ENCODE measurements at regions of chr4 and their contacts with region 1.

Region 1: DNA sequence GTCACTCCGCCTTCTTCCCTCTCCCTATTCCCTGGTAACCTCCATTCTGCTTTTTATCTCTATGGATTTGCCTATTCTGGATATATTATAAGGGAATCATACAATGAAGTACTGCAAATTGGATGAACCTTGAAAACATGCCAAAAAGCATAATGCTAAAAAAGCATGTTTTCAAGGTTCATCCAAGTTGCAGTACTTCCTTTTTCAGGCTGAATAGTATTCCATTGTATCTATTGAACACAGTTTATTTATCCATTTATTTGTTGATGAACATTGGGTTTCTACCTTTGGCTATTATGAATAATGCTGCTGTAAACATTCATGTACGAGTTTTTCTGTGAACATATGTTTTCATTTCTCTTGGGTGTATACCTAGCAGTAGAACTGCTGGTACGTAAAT is 9.2 kb downstream of the SAP30 start:
- DNase-seq: no peak
- ATAC-seq: no peak
- H3K4me3 ChIP-seq: no peak overlapping the region
- H3K27ac ChIP-seq: no peak overlapping the region
- H3K4me1 ChIP-seq: no peaks in the 10 kb centered on the region
- H3K27me3 ChIP-seq: no peaks in the 10 kb centered on the region

Region 2: DNA sequence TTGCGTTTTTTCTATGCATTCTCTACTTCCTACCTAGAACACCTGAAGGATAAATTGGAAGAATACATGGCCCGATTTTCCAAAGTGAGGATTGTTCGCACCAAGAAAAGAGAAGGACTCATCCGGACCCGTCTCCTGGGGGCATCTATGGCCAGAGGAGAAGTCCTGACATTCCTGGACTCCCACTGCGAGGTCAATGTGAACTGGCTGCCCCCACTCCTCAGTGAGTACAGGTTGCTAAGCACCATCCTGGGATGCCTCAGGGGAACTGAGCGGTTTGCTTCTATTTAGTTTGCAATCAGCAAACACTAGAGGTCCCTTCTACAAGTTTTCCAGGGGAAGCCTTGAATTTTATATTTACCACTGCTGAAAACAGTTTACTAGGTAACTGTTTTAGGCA is 570.6 kb before region 1 on chr4:
- intact Hi-C with region 1: no loop called
- DNase-seq: no peak
- ATAC-seq: no peak
- H3K4me3 ChIP-seq: no peak overlapping the region
- H3K27ac ChIP-seq: no peak overlapping the region
- H3K4me1 ChIP-seq: no peaks in the 10 kb centered on the region
- H3K27me3 ChIP-seq: no peaks in the 10 kb centered on the region

Region 3: GRCh38 chr4:173346074-173346473 is 33.9 kb before region 1 on chr4:
- intact Hi-C with region 1: no loop called
- DNase-seq: no peak
- ATAC-seq: no peak
- H3K4me3 ChIP-seq: no peak overlapping the region
- H3K27ac ChIP-seq: no peak overlapping the region
- H3K4me1 ChIP-seq: no peaks in the 10 kb centered on the region
- H3K27me3 ChIP-seq: no peaks in the 10 kb centered on the region

Region 4: DNA sequence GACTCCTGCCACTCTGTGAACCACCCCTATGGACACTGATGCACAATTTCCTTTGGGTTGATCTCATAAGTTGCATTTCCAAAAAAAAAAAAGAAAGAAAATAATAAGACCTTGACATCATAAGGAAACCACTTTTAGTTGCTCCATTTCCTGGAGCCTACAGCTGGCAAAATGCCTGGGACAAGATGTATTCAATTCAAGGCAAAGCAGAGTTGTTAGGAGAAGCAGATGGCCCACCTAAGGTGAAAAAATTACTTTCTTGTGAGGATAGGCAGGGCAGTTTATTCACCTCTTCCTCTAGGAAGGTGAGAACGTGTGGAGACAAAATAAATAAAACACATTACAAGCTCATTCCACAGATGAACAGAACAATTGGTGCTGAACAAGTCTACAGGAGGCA is 33.1 kb after region 1 on chr4:
- intact Hi-C with region 1: loop called in 1 of 2 experiments (anchors 5 kb)
- DNase-seq: no peak
- ATAC-seq: no peak
- H3K4me3 ChIP-seq: no peak overlapping the region
- H3K27ac ChIP-seq: no peak overlapping the region
- H3K4me1 ChIP-seq: no peaks in the 10 kb centered on the region
- H3K27me3 ChIP-seq: no peaks in the 10 kb centered on the region